Endothelial cell of umbilical vein (primary cell): ENCODE measurements at regions of chr17 and their contacts with region 1.

Region 1: DNA sequence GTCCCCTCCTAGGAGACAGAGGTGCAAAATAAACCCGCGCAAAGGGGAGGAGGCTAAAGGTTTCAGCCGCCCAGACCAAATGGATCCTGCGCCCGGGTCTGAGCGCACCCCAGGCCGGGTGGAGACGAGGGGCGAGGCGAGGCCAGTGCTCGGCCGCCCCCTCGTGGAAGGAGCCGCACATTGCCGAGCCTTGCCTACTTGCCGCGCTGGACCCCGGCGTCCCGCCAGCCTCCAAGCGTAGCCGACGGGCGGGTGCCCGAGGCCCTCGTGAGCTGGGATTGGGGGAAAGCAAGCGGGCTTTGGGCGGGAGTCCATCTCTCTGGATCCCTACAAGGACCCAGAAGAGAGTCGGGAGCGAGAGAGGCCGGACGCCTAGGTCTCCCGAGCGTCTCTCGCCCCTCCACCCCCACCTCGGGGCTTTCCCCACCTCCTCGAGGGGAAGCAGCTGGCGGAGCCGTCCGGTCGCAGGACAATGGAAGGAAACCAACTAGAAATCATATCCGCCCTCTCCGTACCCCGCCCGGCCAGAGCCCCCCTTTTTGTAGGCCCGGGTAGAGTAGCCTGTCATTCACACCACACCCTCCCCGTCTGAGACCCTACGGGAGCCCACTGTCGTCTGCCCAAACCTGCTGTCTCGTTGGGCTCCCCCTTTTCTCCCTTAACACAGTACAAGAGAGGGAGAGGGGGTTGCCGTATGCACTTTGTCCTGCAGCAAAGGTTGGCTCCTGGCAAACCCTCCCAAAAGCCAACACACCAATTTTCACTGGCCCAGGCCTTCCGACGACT is 664 bp upstream of the BCL6B start:
- DNase-seq: peak; percentile 97
- H3K4me3 ChIP-seq: peak overlapping the region in 2 of 3 experiments; percentile 59 to 90
- H3K27ac ChIP-seq: peak overlapping the region; percentile 96
- H3K4me1 ChIP-seq: peaks cover 58% of the 10 kb centered on the region
- H3K27me3 ChIP-seq: no peaks in the 10 kb centered on the region
- CTCF ChIP-seq: peak; percentile 97 to 99
- POLR2A ChIP-seq: peak; percentile 66

Region 2: GRCh38 chr17:6868579-6868978 is 153.6 kb before region 1 on chr17:
- CTCF ChIA-PET with region 1: no interaction called
- POLR2A ChIA-PET with region 1: no interaction called
- dilution Hi-C with region 1: no loop called
- intact Hi-C with region 1: no loop called
- DNase-seq: no peak
- H3K4me3 ChIP-seq: no peak overlapping the region
- H3K27ac ChIP-seq: no peak overlapping the region
- H3K4me1 ChIP-seq: no peaks in the 10 kb centered on the region
- H3K27me3 ChIP-seq: peaks cover 17 to 25% of the 10 kb centered on the region in 2 experiments
- CTCF ChIP-seq: no peak
- POLR2A ChIP-seq: no peak

Region 3: GRCh38 chr17:7004398-7005253 is 17.6 kb before region 1 on chr17:
- CTCF ChIA-PET with region 1: interaction called, 29 read pairs
- POLR2A ChIA-PET with region 1: no interaction called
- dilution Hi-C with region 1: no loop called
- intact Hi-C with region 1: no loop called
- DNase-seq: peak; percentile 66
- H3K4me3 ChIP-seq: no peak overlapping the region
- H3K27ac ChIP-seq: no peak overlapping the region
- H3K4me1 ChIP-seq: no peaks in the 10 kb centered on the region
- H3K27me3 ChIP-seq: no peaks in the 10 kb centered on the region
- CTCF ChIP-seq: peak; percentile 53 to 58
- POLR2A ChIP-seq: no peak

Region 4: GRCh38 chr17:7035591-7036368 is 13.6 kb after region 1 on chr17 and contains the start of gene SLC16A13:
- CTCF ChIA-PET with region 1: interaction called, 15 read pairs
- POLR2A ChIA-PET with region 1: interaction called, 23 read pairs
- dilution Hi-C with region 1: no loop called
- intact Hi-C with region 1: loop called (anchors 1 kb)
- DNase-seq: peak; percentile 96
- H3K4me3 ChIP-seq: peak within 1 kb of the TSS; percentile 55 to 76 (median 61)
- H3K27ac ChIP-seq: peak within 1 kb of the TSS; percentile 84
- H3K4me1 ChIP-seq: peaks cover 31% of the 10 kb centered on the region
- H3K27me3 ChIP-seq: no peaks in the 10 kb centered on the region
- CTCF ChIP-seq: no peak
- POLR2A ChIP-seq: no peak
- total RNA-seq, gene SLC16A13: 18.6 and 24.7 TPM in 2 replicates